Calu3 (cell line): ENCODE measurements at regions of chr1 and their contacts with region 1.

Region 1: GRCh38 chr1:20493839-20494608 is 8.0 kb upstream of the CAMK2N1 start:
- DNase-seq: peak; percentile 82
- H3K4me3 Mint-ChIP-seq: no peak overlapping the region
- H3K27ac Mint-ChIP-seq: peak overlapping the region; percentile 94
- H3K4me1 Mint-ChIP-seq: peaks cover 26% of the 10 kb centered on the region
- H3K27me3 Mint-ChIP-seq: no peaks in the 10 kb centered on the region
- CTCF ChIP-seq: peak; percentile 85

Region 2: GRCh38 chr1:20361806-20362640 is 132.0 kb before region 1 on chr1:
- CTCF ChIA-PET with region 1: interaction called, 3 read pairs
- intact Hi-C with region 1: loop called (anchors 5 kb)
- DNase-seq: peak; percentile 71
- H3K4me3 Mint-ChIP-seq: no peak overlapping the region
- H3K27ac Mint-ChIP-seq: no peak overlapping the region
- H3K4me1 Mint-ChIP-seq: peaks cover 20% of the 10 kb centered on the region
- H3K27me3 Mint-ChIP-seq: peaks cover 33% of the 10 kb centered on the region
- CTCF ChIP-seq: peak; percentile 86

Region 3: DNA sequence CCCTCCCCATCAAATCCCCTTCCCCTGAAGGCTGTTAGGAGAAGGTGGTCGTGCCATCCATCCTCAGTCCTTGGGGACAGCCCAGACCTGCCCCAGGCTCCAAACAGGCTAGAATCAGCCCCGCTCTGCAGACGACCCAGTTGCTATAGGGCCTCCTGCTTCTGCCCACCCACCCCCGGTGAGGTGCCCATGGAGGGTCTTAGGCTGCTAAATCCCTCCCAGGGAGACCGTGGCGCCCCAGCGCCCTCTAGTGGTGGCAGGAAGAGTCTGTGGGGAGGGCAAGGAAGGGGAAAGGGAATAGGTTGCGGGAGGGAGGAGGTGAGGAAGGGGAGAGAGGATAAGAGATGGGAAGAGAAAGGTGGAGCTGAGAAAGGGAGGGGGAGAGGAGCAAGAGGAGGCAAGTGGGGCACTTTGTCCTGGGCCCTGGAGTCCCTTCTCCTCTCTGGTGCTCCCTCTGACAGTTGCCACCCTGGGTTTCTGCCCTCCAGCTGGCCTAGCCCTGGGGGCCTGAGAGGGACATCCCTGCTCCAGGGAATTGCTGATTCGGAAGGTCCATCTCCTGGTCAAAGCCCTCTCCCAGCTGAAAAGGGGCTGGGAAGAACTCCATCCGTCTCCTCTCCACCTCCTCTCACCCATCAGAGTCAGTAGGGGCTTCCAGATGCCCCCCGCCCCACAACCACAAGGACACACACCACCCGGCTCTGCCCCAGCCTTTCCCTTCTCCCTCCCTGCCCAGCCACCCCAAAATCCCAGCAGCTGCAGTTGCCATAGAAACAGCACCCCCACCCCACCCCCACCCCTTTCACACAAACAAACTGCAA is 63.5 kb before region 1 on chr1:
- CTCF ChIA-PET with region 1: no interaction called
- intact Hi-C with region 1: loop called (anchors 5 kb)
- DNase-seq: peak; percentile 47
- H3K4me3 Mint-ChIP-seq: no peak overlapping the region
- H3K27ac Mint-ChIP-seq: no peak overlapping the region
- H3K4me1 Mint-ChIP-seq: no peaks in the 10 kb centered on the region
- H3K27me3 Mint-ChIP-seq: peaks cover 9% of the 10 kb centered on the region
- CTCF ChIP-seq: peak; percentile 78

Region 4: GRCh38 chr1:20440785-20441200 is 53.2 kb before region 1 on chr1:
- CTCF ChIA-PET with region 1: no interaction called
- intact Hi-C with region 1: no loop called
- DNase-seq: peak; percentile 64
- H3K4me3 Mint-ChIP-seq: no peak overlapping the region
- H3K27ac Mint-ChIP-seq: no peak overlapping the region
- H3K4me1 Mint-ChIP-seq: peaks cover 7% of the 10 kb centered on the region
- H3K27me3 Mint-ChIP-seq: no peaks in the 10 kb centered on the region
- CTCF ChIP-seq: no peak

Region 5: GRCh38 chr1:20469406-20470076 is 24.5 kb before region 1 on chr1:
- CTCF ChIA-PET with region 1: interaction called, 3 read pairs
- intact Hi-C with region 1: loop called (anchors 1 kb)
- DNase-seq: no peak
- H3K4me3 Mint-ChIP-seq: no peak overlapping the region
- H3K27ac Mint-ChIP-seq: no peak overlapping the region
- H3K4me1 Mint-ChIP-seq: peaks cover 35% of the 10 kb centered on the region
- H3K27me3 Mint-ChIP-seq: peaks cover 13% of the 10 kb centered on the region
- CTCF ChIP-seq: no peak